Naive thymus-derived CD4-positive, alpha-beta T cell (primary cell): ENCODE measurements at regions of chr9 and their contacts with region 1.

Region 1: DNA sequence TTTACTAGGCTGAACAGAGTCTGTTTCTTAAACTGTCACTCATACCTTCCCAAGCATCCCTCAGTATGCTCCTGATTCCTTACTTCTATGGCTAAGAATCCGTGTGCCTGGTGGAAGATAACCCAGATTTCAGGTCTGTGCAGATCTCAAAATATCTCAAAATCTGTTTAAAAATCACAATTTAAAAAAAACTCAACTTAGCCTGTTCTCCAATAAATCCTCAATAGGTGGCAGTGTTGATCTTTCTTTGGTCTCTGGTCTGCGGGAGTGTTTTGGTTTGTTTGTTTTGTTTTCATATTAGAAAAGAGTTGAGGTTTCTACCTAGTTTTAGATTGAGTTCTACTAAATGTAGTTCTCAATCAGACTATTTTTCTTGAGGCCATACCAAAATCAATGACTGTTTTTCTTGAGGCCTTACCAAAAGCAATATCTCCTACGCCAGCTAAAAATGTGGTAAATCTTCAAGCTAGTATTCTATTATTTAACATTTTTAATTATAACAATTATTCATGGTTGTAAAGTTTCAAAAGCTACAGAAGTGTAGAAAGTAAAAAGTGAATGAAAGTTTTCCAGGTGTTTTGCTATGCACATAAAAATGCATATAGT is 57.9 kb downstream of the TGFBR1 start:
- DNase-seq: peak in 7 of 9 donors; percentile 22 to 59 (median 47)
- ATAC-seq: peak; percentile 61
- H3K4me3 ChIP-seq: no peak overlapping the region
- H3K4me3 Mint-ChIP-seq: peak overlapping the region in 1 of 10 donors; percentile 0
- H3K27ac ChIP-seq: no peak overlapping the region
- H3K27ac Mint-ChIP-seq: no peak overlapping the region
- H3K4me1 ChIP-seq: peaks cover 0 to 8% of the 10 kb centered on the region in 2 donors
- H3K4me1 Mint-ChIP-seq: peaks cover 9 to 32% (median 17%) of the 10 kb centered on the region in 7 donors
- H3K27me3 ChIP-seq: no peaks in the 10 kb centered on the region
- H3K27me3 Mint-ChIP-seq: peaks cover 7 to 32% (median 10%) of the 10 kb centered on the region in 5 donors

Region 2: DNA sequence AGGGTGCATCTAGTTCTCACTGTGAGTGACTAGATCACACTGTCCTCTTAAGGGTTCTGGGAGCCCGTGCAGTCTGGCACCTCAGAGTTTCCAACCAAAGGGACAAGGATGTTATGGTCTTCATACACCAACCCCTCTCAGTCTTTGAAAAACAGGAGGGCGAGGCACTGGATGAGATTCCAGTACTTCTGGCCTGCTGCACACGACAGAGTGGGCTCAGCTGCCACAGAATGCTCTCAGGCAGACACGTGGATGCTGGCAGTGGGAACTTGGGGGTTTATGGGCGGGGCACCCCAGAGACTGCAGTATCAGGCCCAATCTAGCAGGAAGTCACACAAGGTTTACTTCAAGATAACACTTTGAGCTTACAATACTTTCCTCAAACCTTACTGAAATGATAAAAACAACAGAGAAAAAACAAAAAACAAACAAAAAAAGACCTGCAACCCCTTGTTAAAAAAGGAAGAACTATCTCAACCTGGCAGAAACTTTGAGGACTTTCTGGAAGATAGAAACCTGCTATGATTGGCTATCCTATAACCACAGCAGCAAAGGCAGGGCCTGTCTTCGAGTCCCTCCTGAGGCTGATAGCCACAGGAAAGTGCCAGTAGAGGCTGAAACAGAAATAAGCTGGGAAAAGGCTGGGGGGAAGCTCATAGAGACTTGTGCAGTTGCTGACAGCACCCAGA is 86.2 kb before region 1 on chr9:
- CTCF ChIA-PET with region 1: no interaction called
- POLR2A ChIA-PET with region 1: no interaction called
- intact Hi-C with region 1: no loop called
- DNase-seq: peak in 7 of 9 donors; percentile 17 to 58 (median 42)
- ATAC-seq: peak; percentile 95
- H3K4me3 ChIP-seq: no peak overlapping the region
- H3K4me3 Mint-ChIP-seq: peak overlapping the region; percentile 1 to 79 (median 62)
- H3K27ac ChIP-seq: peak overlapping the region; percentile 18
- H3K27ac Mint-ChIP-seq: peak overlapping the region; percentile 53 to 93 (median 81)
- H3K4me1 ChIP-seq: peaks cover 17 to 26% of the 10 kb centered on the region in 2 donors
- H3K4me1 Mint-ChIP-seq: peaks cover 35 to 75% (median 60%) of the 10 kb centered on the region in 7 donors
- H3K27me3 ChIP-seq: no peaks in the 10 kb centered on the region
- H3K27me3 Mint-ChIP-seq: peaks cover 0 to 3% (median 0%) of the 10 kb centered on the region in 5 donors

Region 3: DNA sequence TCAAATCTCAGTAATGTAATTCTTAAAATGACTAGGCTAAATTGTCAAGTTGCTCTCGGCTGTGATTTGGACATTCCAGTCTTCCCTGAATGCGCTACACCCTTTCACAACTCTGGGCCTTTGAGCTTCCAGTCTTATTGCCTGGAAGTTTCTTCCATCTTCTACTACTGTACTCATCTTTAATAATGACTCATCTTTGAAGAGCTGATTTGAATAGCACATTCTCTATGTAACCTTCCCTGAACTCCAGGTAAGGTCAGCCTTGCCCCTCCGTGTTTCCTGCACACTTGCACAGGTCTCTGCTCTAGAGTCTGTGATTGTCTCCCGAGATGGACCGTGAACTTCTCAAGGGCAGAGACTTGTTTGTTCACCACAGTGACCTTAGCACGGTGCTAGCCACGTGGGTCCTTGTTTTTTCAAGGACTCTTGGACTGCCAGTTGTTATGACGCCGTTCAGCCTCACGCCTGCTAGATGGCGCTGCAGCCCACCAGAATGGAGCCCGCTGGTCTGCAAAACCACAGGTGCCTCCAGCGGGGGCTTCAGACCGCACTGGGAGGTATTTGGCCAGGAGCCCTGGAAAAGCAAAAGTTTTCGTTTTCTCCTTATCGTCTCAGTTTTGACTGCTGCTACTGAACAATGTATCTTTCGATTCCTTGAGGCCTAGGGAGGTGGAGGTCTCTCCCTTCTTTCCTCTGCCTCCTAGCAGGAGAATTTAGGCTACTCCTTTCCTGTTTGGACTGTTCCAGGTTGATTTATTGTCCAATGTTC is 103.6 kb after region 1 on chr9:
- CTCF ChIA-PET with region 1: no interaction called
- POLR2A ChIA-PET with region 1: no interaction called
- intact Hi-C with region 1: loop called in 1 of 2 experiments (anchors 5 kb)
- DNase-seq: peak; percentile 12 to 65 (median 34)
- ATAC-seq: peak; percentile 84
- H3K4me3 ChIP-seq: no peak overlapping the region
- H3K4me3 Mint-ChIP-seq: peak overlapping the region in 6 of 10 donors; percentile 1 to 42 (median 13)
- H3K27ac ChIP-seq: no peak overlapping the region
- H3K27ac Mint-ChIP-seq: peak overlapping the region in 1 of 9 donors; percentile 23
- H3K4me1 ChIP-seq: peaks cover 0 to 4% of the 10 kb centered on the region in 2 donors
- H3K4me1 Mint-ChIP-seq: peaks cover 0 to 13% (median 10%) of the 10 kb centered on the region in 7 donors
- H3K27me3 ChIP-seq: no peaks in the 10 kb centered on the region
- H3K27me3 Mint-ChIP-seq: peaks cover 0 to 14% (median 6%) of the 10 kb centered on the region in 5 donors

Region 4: DNA sequence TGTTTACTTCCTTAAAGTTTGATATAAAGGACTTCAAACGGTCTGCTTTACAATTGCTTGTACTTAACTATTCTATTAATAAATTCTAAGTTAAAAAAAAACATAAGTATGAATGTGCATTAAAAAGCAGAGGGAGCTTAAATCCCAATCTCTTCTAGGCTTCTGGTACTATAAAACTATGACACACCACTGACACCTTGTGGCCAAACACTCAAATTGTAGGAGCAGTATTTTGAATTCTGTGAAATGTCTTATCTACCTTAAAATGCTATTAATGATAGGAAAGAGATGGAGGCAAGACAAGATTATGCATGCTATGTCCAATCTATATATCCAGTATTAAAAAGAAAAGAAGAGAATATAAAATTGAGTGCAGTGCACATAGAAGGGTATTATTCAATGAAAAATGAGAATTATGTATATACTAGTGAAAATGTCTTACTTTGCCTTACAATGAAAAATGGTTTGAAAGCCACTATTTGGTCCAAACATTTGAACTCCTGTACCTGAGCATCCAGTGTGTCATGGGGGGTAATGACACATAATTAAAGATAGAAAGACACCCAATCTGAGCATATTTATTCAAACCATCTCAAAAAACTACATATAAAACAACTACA is 848.3 kb after region 1 on chr9:
- CTCF ChIA-PET with region 1: no interaction called
- POLR2A ChIA-PET with region 1: no interaction called
- intact Hi-C with region 1: loop called (anchors 5 kb)
- DNase-seq: peak in 7 of 9 donors; percentile 24 to 63 (median 42)
- ATAC-seq: peak; percentile 67
- H3K4me3 ChIP-seq: no peak overlapping the region
- H3K4me3 Mint-ChIP-seq: no peak overlapping the region
- H3K27ac ChIP-seq: no peak overlapping the region
- H3K27ac Mint-ChIP-seq: no peak overlapping the region
- H3K4me1 ChIP-seq: no peaks in the 10 kb centered on the region
- H3K4me1 Mint-ChIP-seq: peaks cover 0 to 5% (median 0%) of the 10 kb centered on the region in 7 donors
- H3K27me3 ChIP-seq: no peaks in the 10 kb centered on the region
- H3K27me3 Mint-ChIP-seq: no peaks in the 10 kb centered on the region

Region 5: DNA sequence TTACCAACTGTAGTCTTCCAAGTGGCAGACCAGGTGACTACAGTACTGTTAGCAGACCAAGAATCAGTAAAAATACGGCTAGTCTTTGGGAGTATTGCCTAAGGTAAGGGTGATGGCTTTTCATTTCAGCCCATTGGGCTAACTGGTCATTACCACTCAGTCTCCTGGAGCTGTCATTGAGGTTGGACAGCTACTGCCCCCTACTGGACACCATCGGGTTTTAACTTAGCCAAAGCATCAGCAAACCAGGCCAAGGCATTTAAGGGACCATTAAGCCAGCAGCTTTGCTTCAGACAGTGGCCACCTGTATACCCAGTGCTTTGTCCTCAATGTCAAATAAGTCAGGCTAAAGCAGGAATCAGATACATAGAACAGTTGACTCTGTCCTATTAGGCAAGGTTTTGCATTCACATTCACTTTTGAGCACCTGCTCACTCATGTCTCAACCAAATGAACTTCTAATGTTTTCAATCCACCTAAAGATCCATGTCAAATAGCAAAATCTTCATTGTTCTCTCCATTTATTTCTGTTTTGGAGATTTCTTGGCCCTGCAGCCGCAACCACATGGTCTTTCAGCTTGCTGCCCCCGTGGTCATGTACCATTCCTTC is 1053.4 kb after region 1 on chr9:
- CTCF ChIA-PET with region 1: no interaction called
- POLR2A ChIA-PET with region 1: no interaction called
- intact Hi-C with region 1: loop called in 1 of 2 experiments (anchors 5 kb)
- DNase-seq: peak; percentile 17 to 53 (median 41)
- ATAC-seq: peak; percentile 84
- H3K4me3 ChIP-seq: no peak overlapping the region
- H3K4me3 Mint-ChIP-seq: no peak overlapping the region
- H3K27ac ChIP-seq: no peak overlapping the region
- H3K27ac Mint-ChIP-seq: no peak overlapping the region
- H3K4me1 ChIP-seq: no peaks in the 10 kb centered on the region
- H3K4me1 Mint-ChIP-seq: peaks cover 0 to 9% (median 0%) of the 10 kb centered on the region in 7 donors
- H3K27me3 ChIP-seq: no peaks in the 10 kb centered on the region
- H3K27me3 Mint-ChIP-seq: no peaks in the 10 kb centered on the region